ENCODE measurements at regions of chr4 and their contacts with region 1.

Region 1: GRCh38 chr4:84529169-84529751 is 30.2 kb upstream of the NKX6-1 start:
- DNase-seq: no peak
- H3K4me3 ChIP-seq: no peak overlapping the region
- CTCF ChIP-seq: peak; percentile 33

Region 2: DNA sequence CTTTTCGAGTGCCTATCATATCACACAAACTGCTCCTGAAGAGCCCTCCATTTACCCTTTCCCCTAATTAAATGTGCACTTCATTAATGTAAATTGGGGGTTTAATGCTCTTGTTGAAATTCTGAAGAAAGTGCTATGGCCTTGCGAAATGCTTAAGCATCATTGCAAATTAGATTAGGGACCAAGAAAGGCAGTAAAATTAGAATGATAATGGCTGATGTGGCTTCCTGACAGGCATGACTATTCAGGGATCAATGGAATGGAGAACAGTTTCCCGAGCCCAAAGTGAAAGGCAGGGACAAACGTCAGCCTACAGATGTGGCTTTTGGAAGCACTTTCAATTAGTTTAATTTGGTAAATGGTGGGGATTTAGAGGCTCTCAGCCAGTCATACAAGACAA is 150.3 kb before region 1 on chr4:
- CTCF ChIA-PET with region 1: no interaction called
- POLR2A ChIA-PET with region 1: no interaction called
- DNase-seq: no peak
- H3K4me3 ChIP-seq: no peak overlapping the region
- CTCF ChIP-seq: no peak

Region 3: DNA sequence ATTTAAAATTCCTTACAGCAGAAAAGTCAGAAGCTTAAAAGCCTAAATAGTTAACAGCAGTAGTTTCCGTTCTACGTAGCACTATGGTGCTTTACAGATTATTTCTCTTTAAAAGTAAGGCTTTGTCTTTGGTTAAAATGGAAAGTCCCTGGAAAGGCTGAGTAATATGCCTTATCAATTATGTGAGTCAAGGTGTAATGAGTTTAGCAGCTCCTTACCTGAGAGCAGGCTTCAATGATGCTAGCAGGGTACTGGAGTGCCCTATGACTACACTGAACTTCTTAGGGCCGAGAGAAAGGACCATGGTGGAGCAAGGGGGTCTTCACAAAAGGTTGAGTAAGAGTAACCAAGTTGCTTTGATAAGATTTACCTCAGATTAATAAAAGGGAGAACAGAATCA is 17.6 kb before region 1 on chr4:
- CTCF ChIA-PET with region 1: interaction called, 17 read pairs
- POLR2A ChIA-PET with region 1: no interaction called
- DNase-seq: no peak
- H3K4me3 ChIP-seq: no peak overlapping the region
- CTCF ChIP-seq: no peak